ENCODE measurements at regions of chr12 and their contacts with region 1.

Region 1: DNA sequence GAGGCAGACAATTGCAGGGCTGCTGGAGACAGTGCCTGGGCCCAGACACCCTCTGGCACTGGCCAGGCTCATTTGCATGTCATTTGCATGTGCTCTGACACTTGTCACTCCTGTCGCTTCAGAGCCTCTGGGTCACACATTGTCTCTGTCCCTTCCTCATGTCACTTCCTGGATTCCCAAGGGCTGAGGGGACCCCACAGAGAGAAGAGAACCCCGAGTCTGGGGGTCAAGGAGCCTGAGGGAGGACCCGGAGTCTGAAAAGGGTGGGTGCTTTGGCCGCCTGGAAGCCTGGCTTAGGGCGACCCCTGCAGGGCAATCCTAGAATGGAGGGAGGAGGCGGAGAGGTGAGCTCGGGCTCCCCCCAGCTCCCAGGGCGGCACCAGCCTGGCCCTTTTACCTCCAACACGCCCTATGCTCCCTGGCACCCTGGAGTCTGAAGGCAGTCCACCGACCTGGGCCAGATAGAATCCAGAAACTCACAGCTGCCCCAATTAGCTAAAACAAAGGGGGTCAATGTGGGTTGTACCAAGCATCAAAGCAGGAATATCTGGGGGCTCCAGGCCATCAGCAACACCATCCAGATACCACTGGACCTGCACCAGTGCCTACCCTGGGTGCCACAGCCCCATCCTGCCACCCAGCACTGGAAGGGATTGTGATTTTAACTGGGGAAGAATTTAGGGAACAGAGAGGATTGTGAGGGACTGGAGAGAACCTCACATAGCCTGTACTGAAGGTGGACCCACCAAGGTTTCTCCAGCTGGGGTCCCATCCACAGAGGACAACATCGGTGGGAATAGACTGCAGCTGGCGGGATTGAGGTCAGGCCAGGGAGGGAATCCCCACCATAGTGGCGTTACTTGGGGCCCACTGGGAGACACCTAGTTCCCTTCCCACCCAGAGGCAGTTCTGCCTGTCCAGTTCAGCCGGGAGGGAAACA is 21.8 kb upstream of the KRT78 start:
- DNase-seq: peak; percentile 93
- H3K4me3 Mint-ChIP-seq: no peak overlapping the region
- H3K27ac Mint-ChIP-seq: no peak overlapping the region
- H3K4me1 Mint-ChIP-seq: peaks cover 31% of the 10 kb centered on the region
- H3K27me3 Mint-ChIP-seq: peaks cover 3% of the 10 kb centered on the region

Region 2: DNA sequence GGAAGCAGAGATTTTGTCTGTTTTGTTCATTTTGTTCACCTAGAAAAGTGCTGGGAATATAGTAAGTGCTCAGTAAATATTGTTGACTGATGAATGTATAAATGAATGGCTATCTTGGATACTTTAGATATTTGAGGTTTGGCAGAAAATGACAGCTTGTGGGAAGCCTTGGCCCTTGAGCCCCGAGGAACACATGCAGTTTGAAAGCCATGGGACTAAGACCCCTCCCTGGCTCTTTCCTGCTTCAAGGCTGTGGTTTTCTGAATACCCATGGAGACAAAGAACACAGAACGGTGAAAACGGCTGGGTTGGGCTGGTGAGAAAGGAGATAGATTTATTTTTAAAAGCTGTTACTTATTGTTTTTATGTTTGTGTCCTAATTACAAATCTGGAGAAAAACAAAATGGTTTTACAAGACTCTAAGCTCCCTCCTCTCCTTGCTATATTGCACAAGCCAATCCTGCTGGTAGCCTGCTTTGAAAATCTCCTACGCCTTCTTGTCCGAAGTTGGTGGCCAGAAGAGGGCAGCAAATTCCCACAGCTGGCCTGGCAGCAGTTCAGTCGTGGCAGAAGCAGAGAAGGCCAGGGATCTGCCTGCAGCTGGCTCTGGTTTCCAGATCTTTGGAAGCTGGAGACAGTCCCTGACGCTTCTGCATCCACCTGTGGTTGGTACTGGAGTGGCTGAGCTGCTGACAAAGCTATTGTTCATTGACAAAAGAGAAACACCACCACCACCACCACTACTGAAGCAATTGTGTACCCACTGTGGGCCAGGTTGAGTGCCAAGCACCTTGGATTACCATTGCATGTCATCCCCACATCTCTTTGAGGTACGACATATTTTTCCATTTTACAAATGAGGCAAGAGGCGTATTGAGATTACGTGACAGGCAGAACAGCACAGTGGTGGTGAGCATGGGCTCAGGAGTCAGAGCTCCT is 498.1 kb before region 1 on chr12:
- intact Hi-C with region 1: loop called (anchors 5 kb)
- DNase-seq: peak; percentile 86
- H3K4me3 Mint-ChIP-seq: no peak overlapping the region
- H3K27ac Mint-ChIP-seq: no peak overlapping the region
- H3K4me1 Mint-ChIP-seq: no peaks in the 10 kb centered on the region
- H3K27me3 Mint-ChIP-seq: peaks cover 13% of the 10 kb centered on the region

Region 3: DNA sequence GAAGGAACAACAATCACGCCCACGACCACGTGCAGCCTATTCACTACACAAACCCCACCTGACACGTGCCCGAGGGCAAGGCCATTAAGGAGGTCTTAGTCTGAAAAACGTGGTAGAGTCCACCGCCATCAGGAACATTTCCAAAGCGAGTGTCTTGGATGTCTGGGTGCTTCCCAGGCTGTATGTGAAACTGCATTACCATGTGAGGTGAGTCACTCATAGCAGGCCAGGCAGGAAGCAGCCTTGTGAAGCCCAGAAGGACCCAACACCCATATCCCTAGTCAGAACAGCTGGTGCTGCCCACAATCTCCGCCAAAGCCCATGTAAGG is 33.2 kb before region 1 on chr12:
- intact Hi-C with region 1: no loop called
- DNase-seq: peak; percentile 57
- H3K4me3 Mint-ChIP-seq: peak overlapping the region; percentile 65
- H3K27ac Mint-ChIP-seq: peak overlapping the region; percentile 85
- H3K4me1 Mint-ChIP-seq: peaks cover 28% of the 10 kb centered on the region
- H3K27me3 Mint-ChIP-seq: peaks cover 2% of the 10 kb centered on the region

Measured in activated CD4-positive, alpha-beta T cell treated with anti-CD3 and anti-CD28 coated beads, Interleukin-2, amount 10 ng/mL, durations not matched to agents 24 days and 14 days (primary cell).